Heart right ventricle (tissue), 16 donors: ENCODE measurements at regions of chr19 and their contacts with region 1.

Region 1: DNA sequence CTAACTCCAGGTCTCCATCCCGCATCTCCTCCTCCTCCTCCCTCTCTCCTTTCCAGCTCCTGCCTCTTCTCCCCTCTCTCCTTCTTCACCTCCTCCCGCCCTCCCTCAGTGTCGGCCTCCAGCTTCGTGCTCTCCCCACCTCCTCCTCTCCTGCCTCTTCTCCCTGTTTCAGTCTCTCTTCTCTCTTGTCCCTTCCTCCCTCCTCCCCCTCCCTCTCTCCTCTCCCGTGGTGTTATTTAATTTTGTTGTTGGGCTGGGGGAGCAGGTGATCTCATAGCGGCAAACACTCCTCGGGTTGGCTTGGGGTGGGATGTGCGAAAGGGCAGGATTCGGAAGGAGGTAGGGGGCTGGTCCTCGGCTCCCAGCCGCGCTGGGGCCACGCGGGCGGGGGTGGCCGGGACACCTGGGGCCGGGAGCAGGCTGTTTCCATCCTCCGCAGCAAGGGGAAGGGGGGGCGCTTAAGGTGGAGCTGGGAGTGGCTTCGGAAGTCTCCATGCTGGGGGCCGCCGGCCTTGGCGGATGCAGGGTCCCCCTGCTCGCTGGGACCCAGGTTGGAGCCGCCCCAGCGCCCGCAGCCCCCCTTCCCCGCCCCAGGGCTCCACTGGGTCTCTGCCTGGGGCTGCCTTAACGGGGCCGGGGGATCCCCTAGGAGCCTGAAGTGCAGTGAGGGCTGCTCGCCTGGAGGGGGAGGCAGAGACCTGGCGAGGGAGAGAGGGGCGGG is at the start of gene CA11:
- DNase-seq: peak; percentile 91
- ATAC-seq: peak; percentile 87 to 92 (median 90)
- H3K4me3 ChIP-seq: peak within 1 kb of the TSS; percentile 33 to 65 (median 58)
- H3K27ac ChIP-seq: peak within 1 kb of the TSS in 9 of 10 donors; percentile 71 to 88 (median 79)
- H3K4me1 ChIP-seq: peaks cover 0 to 26% (median 16%) of the 10 kb centered on the region in 9 donors
- H3K27me3 ChIP-seq: no peaks in the 10 kb centered on the region
- CTCF ChIP-seq: peak; percentile 89 to 96 (median 92)
- total RNA-seq, gene CA11: 1.8 to 9.6 (median 3.8) TPM

Region 2: GRCh38 chr19:48540110-48540509 is 106.1 kb before region 1 on chr19:
- intact Hi-C with region 1: no loop called
- DNase-seq: no peak
- ATAC-seq: no peak
- H3K4me3 ChIP-seq: no peak overlapping the region
- H3K27ac ChIP-seq: no peak overlapping the region
- H3K4me1 ChIP-seq: peaks cover 0 to 2% (median 0%) of the 10 kb centered on the region in 9 donors
- H3K27me3 ChIP-seq: peaks cover 0 to 6% (median 0%) of the 10 kb centered on the region in 7 donors
- CTCF ChIP-seq: no peak

Region 3: GRCh38 chr19:48738557-48739399 is 92.6 kb after region 1 on chr19:
- intact Hi-C with region 1: loop called in 2 of 10 experiments (anchors 5 to 10 kb)
- DNase-seq: peak; percentile 95 to 97
- ATAC-seq: peak; percentile 82 to 90 (median 86)
- H3K4me3 ChIP-seq: peak overlapping the region; percentile 60 to 84 (median 71)
- H3K27ac ChIP-seq: peak overlapping the region; percentile 81 to 97 (median 94)
- H3K4me1 ChIP-seq: peaks cover 0 to 36% (median 19%) of the 10 kb centered on the region in 9 donors
- H3K27me3 ChIP-seq: peaks cover 0 to 21% (median 0%) of the 10 kb centered on the region in 7 donors
- CTCF ChIP-seq: peak in 8 of 9 donors; percentile 12 to 73 (median 36)

Region 4: GRCh38 chr19:48835734-48836088 is 189.6 kb after region 1 on chr19:
- intact Hi-C with region 1: loop called in 8 of 10 experiments (anchors 5 to 10 kb)
- DNase-seq: peak; percentile 93
- ATAC-seq: peak; percentile 91 to 96 (median 92)
- H3K4me3 ChIP-seq: peak overlapping the region; percentile 21 to 55 (median 42)
- H3K27ac ChIP-seq: peak overlapping the region in 8 of 10 donors; percentile 29 to 77 (median 64)
- H3K4me1 ChIP-seq: peaks cover 0 to 21% (median 10%) of the 10 kb centered on the region in 9 donors
- H3K27me3 ChIP-seq: peaks cover 0 to 4% (median 0%) of the 10 kb centered on the region in 7 donors
- CTCF ChIP-seq: peak; percentile 82 to 94 (median 90)

Region 5: GRCh38 chr19:48954595-48955310 is 308.6 kb after region 1 on chr19 and contains the start of gene BAX:
- intact Hi-C with region 1: loop called in 1 of 10 experiments (anchors 10 kb)
- DNase-seq: peak; percentile 96 to 98
- ATAC-seq: peak; percentile 91 to 97 (median 94)
- H3K4me3 ChIP-seq: peak within 1 kb of the TSS; percentile 76 to 98 (median 88)
- H3K27ac ChIP-seq: peak within 1 kb of the TSS; percentile 57 to 96 (median 88)
- H3K4me1 ChIP-seq: peaks cover 5 to 33% (median 19%) of the 10 kb centered on the region in 9 donors
- H3K27me3 ChIP-seq: no peaks in the 10 kb centered on the region
- CTCF ChIP-seq: peak in 1 of 9 donors; percentile 10
- total RNA-seq, gene BAX: 11.5 to 41.5 (median 19.5) TPM